Keratinocyte (primary cell): ENCODE measurements at regions of chr16 and their contacts with region 1.

Region 1: GRCh38 chr16:75789237-75789636 is 62.9 kb upstream of the CPHXL start:
- DNase-seq: no peak
- H3K4me3 ChIP-seq: no peak overlapping the region
- H3K27ac ChIP-seq: no peak overlapping the region
- H3K4me1 ChIP-seq: no peaks in the 10 kb centered on the region
- H3K27me3 ChIP-seq: no peaks in the 10 kb centered on the region
- CTCF ChIP-seq: peak in 2 of 3 experiments; percentile 50 to 69

Region 2: GRCh38 chr16:77171745-77172635 is 1382.8 kb after region 1 on chr16:
- dilution Hi-C with region 1: loop called (anchors 25 kb)
- DNase-seq: peak; percentile 28
- H3K4me3 ChIP-seq: no peak overlapping the region
- H3K27ac ChIP-seq: no peak overlapping the region
- H3K4me1 ChIP-seq: no peaks in the 10 kb centered on the region
- H3K27me3 ChIP-seq: no peaks in the 10 kb centered on the region
- CTCF ChIP-seq: peak; percentile 31 to 61 (median 49)